ENCODE measurements at regions of chr5 and their contacts with region 1.

Region 1: GRCh38 chr5:170791325-170791954 is 7.9 kb downstream of the GABRP start:
- DNase-seq: peak; percentile 56 to 78
- H3K4me3 ChIP-seq: no peak overlapping the region
- H3K27ac ChIP-seq: no peak overlapping the region
- H3K4me1 ChIP-seq: 0 out of 2 replicates have a peak, but pooled peaks cover 3% of the 10 kb centered on the region
- H3K27me3 ChIP-seq: no peaks in the 10 kb centered on the region
- CTCF ChIP-seq: peak; percentile 91

Region 2: DNA sequence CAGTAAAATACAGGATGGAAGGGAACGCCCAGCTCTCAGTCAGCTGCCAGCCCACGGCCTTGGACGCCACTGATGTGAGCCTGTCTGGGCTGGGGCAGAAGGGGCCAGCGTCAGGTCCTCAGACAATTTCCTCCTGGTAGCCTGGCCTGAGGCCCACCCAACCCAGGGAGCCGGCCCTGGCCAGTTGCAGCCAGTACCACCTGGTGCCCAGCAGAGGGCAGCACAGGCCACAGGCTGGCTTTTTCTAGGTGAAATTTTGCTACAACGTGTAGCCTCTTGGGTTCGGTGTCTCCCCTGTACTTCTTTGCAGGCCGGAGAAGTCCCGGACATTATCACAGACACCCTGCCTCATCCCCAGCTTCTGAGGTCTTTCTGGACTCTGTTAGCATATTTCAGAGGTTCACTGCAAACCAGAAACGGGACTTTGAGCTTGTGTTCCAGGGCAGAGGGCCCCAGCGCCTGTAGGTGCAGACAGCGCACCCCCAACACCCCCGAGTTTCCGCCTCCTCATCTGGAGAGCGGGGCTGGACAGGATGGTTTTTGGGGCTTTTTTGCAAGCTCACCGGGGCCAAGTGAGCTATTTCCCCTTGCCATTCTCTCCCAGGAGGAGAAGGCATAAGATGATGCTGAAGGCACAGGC is 356.4 kb before region 1 on chr5:
- CTCF ChIA-PET with region 1: interaction called, 3 read pairs
- POLR2A ChIA-PET with region 1: no interaction called
- intact Hi-C with region 1: loop called (anchors 10 kb)
- DNase-seq: peak; percentile 39 to 45
- H3K4me3 ChIP-seq: no peak overlapping the region
- H3K27ac ChIP-seq: no peak overlapping the region
- H3K4me1 ChIP-seq: no peaks in the 10 kb centered on the region
- H3K27me3 ChIP-seq: peaks cover 5% of the 10 kb centered on the region; the same call in 1 of the 2 replicates
- CTCF ChIP-seq: peak; percentile 95

Region 3: GRCh38 chr5:170638454-170639220 is 152.8 kb before region 1 on chr5:
- CTCF ChIA-PET with region 1: no interaction called
- POLR2A ChIA-PET with region 1: interaction called, 10 read pairs
- intact Hi-C with region 1: loop called (anchors 1 kb)
- DNase-seq: peak; percentile 43 to 73
- H3K4me3 ChIP-seq: no peak overlapping the region
- H3K27ac ChIP-seq: no peak overlapping the region
- H3K4me1 ChIP-seq: peaks cover 11% of the 10 kb centered on the region
- H3K27me3 ChIP-seq: no peaks in the 10 kb centered on the region; the same call in 1 of the 2 replicates
- CTCF ChIP-seq: peak; percentile 96